ENCODE measurements at regions of chr7 and their contacts with region 1.

Region 1: GRCh38 chr7:112939574-112940314 is 146.9 kb downstream of the GPR85 start:
- DNase-seq: peak; percentile 100
- H3K4me3 ChIP-seq: peak overlapping the region; percentile 74 to 84 (median 74)
- H3K27ac ChIP-seq: peak overlapping the region; percentile 27
- H3K4me1 ChIP-seq: peaks cover 11% of the 10 kb centered on the region
- H3K27me3 ChIP-seq: peaks cover 0 to 3% of the 10 kb centered on the region in 2 experiments
- CTCF ChIP-seq: no peak
- POLR2A ChIP-seq: peak; percentile 75

Region 2: DNA sequence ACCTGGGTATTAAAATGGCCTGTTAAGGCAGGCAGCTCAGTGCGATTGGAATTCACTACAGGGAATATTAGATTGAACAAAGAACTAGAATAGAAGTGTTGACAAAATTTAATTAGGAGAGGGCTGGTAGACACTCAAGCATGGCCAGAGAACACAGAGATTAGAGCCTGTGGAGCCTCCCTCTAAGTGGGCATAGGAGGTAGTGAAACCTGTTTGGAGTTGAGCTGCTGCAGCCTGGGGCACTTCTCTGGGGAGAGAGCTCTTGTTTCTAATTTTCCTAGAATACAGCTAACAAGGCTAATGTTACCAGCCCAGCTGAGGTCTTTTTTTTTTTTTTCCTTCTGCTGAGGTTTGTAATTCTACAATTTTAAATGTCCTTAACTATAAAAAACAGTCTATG is 195.9 kb before region 1 on chr7:
- CTCF ChIA-PET with region 1: no interaction called
- POLR2A ChIA-PET with region 1: no interaction called
- dilution Hi-C with region 1: no loop called
- intact Hi-C with region 1: no loop called
- DNase-seq: no peak
- H3K4me3 ChIP-seq: no peak overlapping the region
- H3K27ac ChIP-seq: no peak overlapping the region
- H3K4me1 ChIP-seq: no peaks in the 10 kb centered on the region
- H3K27me3 ChIP-seq: no peaks in the 10 kb centered on the region
- CTCF ChIP-seq: no peak
- POLR2A ChIP-seq: no peak

Region 3: DNA sequence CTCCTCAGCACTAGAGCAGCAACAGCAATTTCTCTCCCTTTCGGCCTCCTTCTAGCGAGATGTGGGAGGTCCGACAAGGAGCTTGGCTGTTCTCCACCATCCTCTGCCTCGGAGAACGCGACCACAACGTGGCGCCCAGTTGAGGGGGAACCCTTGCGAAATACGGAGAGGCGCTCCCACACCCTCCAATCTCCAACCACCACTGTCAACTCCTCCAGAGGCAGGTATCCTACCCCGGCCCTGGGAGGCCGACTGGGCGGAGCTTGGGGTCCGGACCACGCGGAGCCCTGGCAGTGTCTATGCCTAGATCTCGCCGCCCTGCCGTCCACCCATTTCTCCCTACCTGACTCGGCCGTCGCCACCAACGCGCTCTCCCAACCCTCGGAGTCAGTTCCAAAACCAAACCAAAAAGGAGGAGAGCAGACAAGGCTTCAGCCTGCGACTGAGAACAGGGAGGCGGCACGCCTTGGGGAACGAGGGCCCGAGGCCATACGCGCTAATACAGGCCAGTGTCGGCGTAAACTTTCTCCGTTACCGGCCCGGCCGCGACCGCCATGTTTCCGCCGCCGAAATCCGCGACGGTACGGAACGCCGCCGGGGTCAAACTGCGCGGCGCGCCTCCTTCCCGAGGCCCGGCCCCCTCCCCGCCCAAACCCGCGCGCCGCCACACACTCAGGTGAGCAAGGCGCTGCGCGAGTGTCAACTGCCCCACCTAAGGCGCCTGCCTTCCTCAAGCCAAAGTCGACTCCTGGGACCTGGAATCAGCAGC is 149.7 kb before region 1 on chr7 and contains the start of gene TMEM168:
- CTCF ChIA-PET with region 1: no interaction called
- POLR2A ChIA-PET with region 1: interaction called, 3 read pairs
- dilution Hi-C with region 1: no loop called
- intact Hi-C with region 1: loop called (anchors 2 kb)
- DNase-seq: peak; percentile 87
- H3K4me3 ChIP-seq: peak within 1 kb of the TSS; percentile 84 to 87 (median 86)
- H3K27ac ChIP-seq: peak within 1 kb of the TSS; percentile 76
- H3K4me1 ChIP-seq: peaks cover 18% of the 10 kb centered on the region
- H3K27me3 ChIP-seq: no peaks in the 10 kb centered on the region
- CTCF ChIP-seq: no peak
- POLR2A ChIP-seq: peak; percentile 85
- total RNA-seq, gene TMEM168: 23.8 and 24.4 TPM in 2 replicates

Region 4: DNA sequence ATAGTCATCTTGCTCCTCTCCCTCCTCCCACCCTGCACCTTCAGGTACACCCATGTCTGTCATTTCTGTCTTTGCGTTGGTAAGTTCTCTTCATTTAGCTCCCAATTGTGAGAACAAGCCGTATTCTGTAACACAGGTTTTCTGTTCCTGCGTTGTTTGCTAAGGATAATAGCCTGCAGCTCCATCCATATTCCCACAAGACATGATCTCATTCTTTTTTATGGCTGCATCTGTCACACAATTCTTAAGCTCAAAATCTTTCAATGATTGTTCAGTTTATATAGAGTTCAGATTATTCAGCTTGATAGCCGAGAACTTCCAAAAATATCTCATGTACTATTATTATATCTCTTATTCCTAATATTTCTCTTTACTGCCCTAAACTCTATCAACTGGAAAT is 133.6 kb before region 1 on chr7:
- CTCF ChIA-PET with region 1: no interaction called
- POLR2A ChIA-PET with region 1: no interaction called
- dilution Hi-C with region 1: no loop called
- intact Hi-C with region 1: no loop called
- DNase-seq: no peak
- H3K4me3 ChIP-seq: no peak overlapping the region
- H3K27ac ChIP-seq: no peak overlapping the region
- H3K4me1 ChIP-seq: no peaks in the 10 kb centered on the region
- H3K27me3 ChIP-seq: peaks cover 2 to 6% of the 10 kb centered on the region in 2 experiments
- CTCF ChIP-seq: no peak
- POLR2A ChIP-seq: no peak